Heart right ventricle (tissue), 16 donors: ENCODE measurements at regions of chr5 and their contacts with region 1.

Region 1: GRCh38 chr5:134708301-134708700 is 30.0 kb upstream of the CAMLG start:
- DNase-seq: no peak
- ATAC-seq: no peak
- H3K4me3 ChIP-seq: no peak overlapping the region
- H3K27ac ChIP-seq: no peak overlapping the region
- H3K4me1 ChIP-seq: no peaks in the 10 kb centered on the region
- H3K27me3 ChIP-seq: no peaks in the 10 kb centered on the region
- CTCF ChIP-seq: no peak

Region 2: GRCh38 chr5:134784241-134784920 is 76.1 kb after region 1 on chr5:
- intact Hi-C with region 1: loop called in 1 of 10 experiments (anchors 10 kb)
- DNase-seq: no peak
- ATAC-seq: no peak
- H3K4me3 ChIP-seq: no peak overlapping the region
- H3K27ac ChIP-seq: no peak overlapping the region
- H3K4me1 ChIP-seq: no peaks in the 10 kb centered on the region
- H3K27me3 ChIP-seq: no peaks in the 10 kb centered on the region
- CTCF ChIP-seq: peak in 2 of 9 donors; percentile 6 to 11